ENCODE measurements at regions of chr2 and their contacts with region 1.

Region 1: DNA sequence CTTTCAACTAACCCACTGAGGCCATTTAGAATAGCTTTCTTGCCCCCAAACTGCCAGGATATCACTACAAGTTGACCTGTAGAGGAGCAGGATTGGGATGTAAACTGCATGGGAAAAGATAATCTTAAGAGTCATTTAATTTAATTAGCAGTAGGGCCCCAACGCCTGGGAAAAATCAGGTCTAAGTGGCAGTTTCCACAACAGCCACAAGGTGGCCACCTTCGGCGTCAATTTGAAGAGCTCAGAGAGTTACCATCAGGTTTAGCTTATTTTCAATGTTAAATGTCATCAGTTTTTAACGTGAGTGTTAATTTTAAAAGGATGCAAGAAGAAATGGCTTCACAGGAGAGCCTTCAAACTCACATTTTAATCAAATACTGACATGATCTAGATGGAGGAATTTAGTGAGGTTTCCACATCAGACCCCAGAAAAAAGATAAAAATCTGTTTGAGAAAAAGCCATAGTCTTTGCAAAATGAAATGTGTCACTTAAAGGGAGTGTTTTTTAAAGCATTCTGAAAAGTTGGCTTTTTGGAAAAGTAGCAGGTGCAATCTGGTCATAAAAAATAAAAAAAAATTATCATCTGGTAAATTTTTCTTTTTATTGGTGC is 77.3 kb upstream of the UPP2 start:
- DNase-seq: peak in 8 of 9 experiments; percentile 33 to 66 (median 51)
- ATAC-seq: peak; percentile 59
- H3K4me3 ChIP-seq: no peak overlapping the region
- H3K4me3 Mint-ChIP-seq: no peak overlapping the region
- H3K27ac ChIP-seq: no peak overlapping the region
- H3K27ac Mint-ChIP-seq: no peak overlapping the region
- H3K4me1 ChIP-seq: no peaks in the 10 kb centered on the region
- H3K4me1 Mint-ChIP-seq: peaks cover 3% of the 10 kb centered on the region
- H3K27me3 ChIP-seq: no peaks in the 10 kb centered on the region
- H3K27me3 Mint-ChIP-seq: no peaks in the 10 kb centered on the region
- CTCF ChIP-seq: peak; percentile 79

Region 2: GRCh38 chr2:158013891-158014290 is 10.5 kb before region 1 on chr2:
- CTCF ChIA-PET with region 1: interaction called, 13 read pairs
- POLR2A ChIA-PET with region 1: no interaction called
- intact Hi-C with region 1: no loop called
- DNase-seq: no peak
- ATAC-seq: no peak
- H3K4me3 ChIP-seq: no peak overlapping the region
- H3K4me3 Mint-ChIP-seq: no peak overlapping the region
- H3K27ac ChIP-seq: no peak overlapping the region
- H3K27ac Mint-ChIP-seq: no peak overlapping the region
- H3K4me1 ChIP-seq: no peaks in the 10 kb centered on the region
- H3K4me1 Mint-ChIP-seq: peaks cover 3% of the 10 kb centered on the region
- H3K27me3 ChIP-seq: no peaks in the 10 kb centered on the region
- H3K27me3 Mint-ChIP-seq: peaks cover 9% of the 10 kb centered on the region
- CTCF ChIP-seq: no peak

Region 3: DNA sequence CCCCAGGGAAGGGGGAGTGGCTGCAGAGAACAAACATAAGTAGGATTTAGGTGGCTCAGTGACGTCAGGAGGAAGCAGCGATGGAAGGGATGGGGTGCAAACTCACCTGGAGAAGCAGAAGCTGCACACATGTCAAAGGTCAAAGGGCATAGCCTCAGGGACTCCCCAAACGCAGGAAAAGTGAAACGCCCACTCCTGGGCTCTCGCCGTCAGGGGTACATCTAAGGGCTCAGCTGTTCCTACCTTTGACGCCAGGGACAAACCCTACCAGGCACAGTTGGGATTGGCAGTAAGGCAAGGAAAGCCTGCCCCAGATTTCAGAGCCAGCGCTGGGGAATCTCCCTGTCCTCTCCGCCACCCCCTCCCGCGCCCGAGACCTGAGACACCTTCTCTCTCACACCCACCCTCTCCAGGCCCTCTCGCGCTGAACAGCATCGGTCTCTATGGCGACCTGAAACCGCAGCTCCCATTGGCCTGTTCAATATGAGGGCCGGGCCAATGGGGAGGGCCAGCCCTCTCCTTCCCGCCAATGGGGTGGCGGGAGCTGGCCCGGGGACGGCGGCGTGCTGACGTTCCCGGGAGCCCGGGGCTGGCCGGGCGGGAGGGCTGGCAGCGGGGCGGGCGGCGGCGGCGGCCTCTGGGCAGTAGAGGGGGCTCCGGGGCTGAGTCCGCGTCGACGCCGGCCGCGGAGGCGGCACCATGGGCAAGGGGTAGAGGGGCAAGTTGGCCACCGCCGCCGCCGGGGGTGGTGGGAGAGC is 432.1 kb after region 1 on chr2 and contains the starts of genes CCDC148 and PKP4:
- CTCF ChIA-PET with region 1: no interaction called
- POLR2A ChIA-PET with region 1: no interaction called
- intact Hi-C with region 1: loop called in 1 of 2 experiments (anchors 5 kb)
- DNase-seq: peak; percentile 74 to 97 (median 86)
- ATAC-seq: peak; percentile 91
- H3K4me3 ChIP-seq: peak within 1 kb of the TSS; percentile 69 to 81
- H3K4me3 Mint-ChIP-seq: peak within 1 kb of the TSS; percentile 96
- H3K27ac ChIP-seq: peak within 1 kb of the TSS; percentile 23 to 49
- H3K27ac Mint-ChIP-seq: peak within 1 kb of the TSS; percentile 76
- H3K4me1 ChIP-seq: peaks cover 12% of the 10 kb centered on the region
- H3K4me1 Mint-ChIP-seq: peaks cover 16% of the 10 kb centered on the region
- H3K27me3 ChIP-seq: no peaks in the 10 kb centered on the region
- H3K27me3 Mint-ChIP-seq: peaks cover 13% of the 10 kb centered on the region
- CTCF ChIP-seq: no peak
- total RNA-seq, gene CCDC148: not detected
- total RNA-seq, gene PKP4: 5.7 to 8.1 TPM

Region 4: GRCh38 chr2:158753641-158754611 is 729.5 kb after region 1 on chr2:
- CTCF ChIA-PET with region 1: interaction called, 67 read pairs
- POLR2A ChIA-PET with region 1: interaction called, 4 read pairs
- intact Hi-C with region 1: loop called (anchors 1 to 2 kb)
- DNase-seq: peak in 4 of 9 experiments; percentile 21 to 58 (median 37)
- ATAC-seq: peak; percentile 52
- H3K4me3 ChIP-seq: no peak overlapping the region
- H3K4me3 Mint-ChIP-seq: no peak overlapping the region
- H3K27ac ChIP-seq: no peak overlapping the region
- H3K27ac Mint-ChIP-seq: no peak overlapping the region
- H3K4me1 ChIP-seq: no peaks in the 10 kb centered on the region
- H3K4me1 Mint-ChIP-seq: no peaks in the 10 kb centered on the region
- H3K27me3 ChIP-seq: no peaks in the 10 kb centered on the region
- H3K27me3 Mint-ChIP-seq: peaks cover 20% of the 10 kb centered on the region
- CTCF ChIP-seq: peak; percentile 91

Region 5: DNA sequence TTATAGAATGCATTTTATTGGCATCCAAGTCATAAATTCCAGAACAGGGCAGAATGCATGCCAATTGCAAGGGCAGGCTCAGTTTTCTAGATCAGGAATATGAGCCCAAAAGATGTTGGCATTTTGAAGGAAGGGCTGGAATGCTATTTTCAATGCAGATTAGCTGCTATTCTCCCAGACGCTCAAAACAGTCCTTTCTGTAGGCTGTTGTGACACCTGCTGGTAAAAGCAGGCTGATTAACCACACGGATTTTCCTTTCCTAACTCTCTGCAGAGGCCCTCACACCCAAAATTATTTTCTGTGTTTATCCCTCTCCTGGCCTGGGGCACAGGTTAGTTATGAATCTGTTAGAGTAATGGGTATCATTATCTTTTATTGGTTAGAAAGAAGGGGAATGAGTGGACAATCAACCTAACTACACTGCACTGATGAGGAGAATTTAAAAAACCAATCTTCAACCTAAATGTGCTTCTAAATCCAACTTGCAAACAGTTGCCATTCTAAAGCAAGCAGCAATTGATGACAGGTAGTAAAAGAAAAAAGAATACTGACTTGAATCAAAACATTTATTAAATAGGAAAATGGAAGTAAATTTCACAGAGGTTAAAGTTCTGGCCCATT is 1944.0 kb after region 1 on chr2:
- CTCF ChIA-PET with region 1: no interaction called
- POLR2A ChIA-PET with region 1: no interaction called
- intact Hi-C with region 1: loop called in 1 of 2 experiments (anchors 10 kb)
- DNase-seq: peak in 2 of 9 experiments; percentile 22 to 33
- ATAC-seq: no peak
- H3K4me3 ChIP-seq: no peak overlapping the region
- H3K4me3 Mint-ChIP-seq: no peak overlapping the region
- H3K27ac ChIP-seq: no peak overlapping the region
- H3K27ac Mint-ChIP-seq: no peak overlapping the region
- H3K4me1 ChIP-seq: no peaks in the 10 kb centered on the region
- H3K4me1 Mint-ChIP-seq: no peaks in the 10 kb centered on the region
- H3K27me3 ChIP-seq: no peaks in the 10 kb centered on the region
- H3K27me3 Mint-ChIP-seq: no peaks in the 10 kb centered on the region
- CTCF ChIP-seq: no peak

Measured in CD8-positive, alpha-beta T cell (primary cell).